Brain microvascular endothelial cell (primary cell): ENCODE measurements at regions of chr7 and their contacts with region 1.

Region 1: DNA sequence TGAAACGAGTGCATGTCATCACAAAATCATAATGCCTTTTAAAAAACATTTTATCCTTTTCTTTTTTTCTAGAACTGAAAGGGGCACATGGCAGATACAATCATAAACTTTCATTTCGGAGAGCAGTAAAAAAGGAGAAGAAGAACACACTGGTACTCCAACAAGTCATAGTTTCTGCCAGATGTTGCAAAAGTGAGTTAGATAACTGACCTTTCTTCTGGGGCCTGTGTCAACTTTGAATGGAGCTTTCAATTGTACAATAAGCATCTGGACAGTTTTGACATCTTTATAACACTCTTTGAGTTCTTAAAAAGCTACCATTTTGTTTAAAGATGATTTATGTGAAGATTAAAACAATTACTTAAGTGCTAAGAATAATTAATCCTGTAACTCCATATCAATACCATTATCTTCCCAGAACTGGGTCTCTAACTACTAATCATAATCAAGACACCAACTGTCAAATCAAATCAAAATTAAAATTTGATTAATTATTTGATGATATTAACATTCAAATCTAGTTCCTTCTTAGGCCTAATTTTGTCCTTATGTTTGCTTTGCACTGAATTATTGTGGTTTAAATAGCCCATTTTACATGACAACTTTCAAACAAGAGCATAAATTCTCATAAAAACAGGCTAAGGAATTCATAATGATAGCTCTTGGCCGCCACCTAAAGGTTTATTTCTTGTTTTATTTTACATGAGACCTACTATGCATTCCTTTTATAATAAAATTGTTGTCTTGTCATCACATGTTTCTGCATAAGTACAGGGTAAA is 19.5 kb upstream of the ITGB8 start:
- DNase-seq: peak; percentile 70
- H3K4me3 ChIP-seq: no peak overlapping the region
- H3K27ac ChIP-seq: no peak overlapping the region
- H3K27me3 ChIP-seq: no peaks in the 10 kb centered on the region
- CTCF ChIP-seq: peak; percentile 19

Region 2: DNA sequence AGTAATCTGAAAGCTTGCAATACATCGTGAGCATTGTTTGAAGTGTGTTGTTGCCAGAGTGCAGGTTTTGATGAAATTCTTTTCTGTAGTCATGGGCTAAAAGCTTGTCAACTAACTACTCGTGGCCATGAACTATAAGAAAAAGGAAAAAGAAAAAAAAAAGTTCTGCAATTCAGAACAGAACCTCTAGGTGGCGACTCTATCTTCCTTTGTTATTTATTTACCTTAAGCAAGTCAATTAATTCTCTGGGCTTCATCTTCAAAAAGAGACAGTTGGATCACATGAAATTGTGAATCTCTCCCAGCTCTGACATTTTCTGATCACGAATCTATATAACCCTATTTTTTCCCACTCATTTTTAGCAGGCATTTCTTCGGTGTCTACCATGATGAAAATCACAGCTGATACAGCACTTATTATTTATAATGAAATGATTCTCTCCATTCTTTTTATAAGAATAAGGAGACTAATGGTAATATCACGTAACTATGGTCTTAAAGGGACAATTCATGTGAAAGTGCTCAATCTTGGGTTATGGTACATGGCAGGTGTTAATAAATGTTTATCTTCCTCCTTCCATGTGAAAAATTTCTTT is 556.5 kb before region 1 on chr7:
- in situ Hi-C with region 1: loop called (anchors 25 kb)
- DNase-seq: peak; percentile 9
- H3K4me3 ChIP-seq: no peak overlapping the region
- H3K27ac ChIP-seq: no peak overlapping the region
- H3K27me3 ChIP-seq: no peaks in the 10 kb centered on the region
- CTCF ChIP-seq: peak; percentile 58

Region 3: GRCh38 chr7:20560325-20561180 is 249.4 kb after region 1 on chr7:
- in situ Hi-C with region 1: no loop called
- DNase-seq: no peak
- H3K4me3 ChIP-seq: no peak overlapping the region
- H3K27ac ChIP-seq: no peak overlapping the region
- H3K27me3 ChIP-seq: no peaks in the 10 kb centered on the region
- CTCF ChIP-seq: no peak